Natural killer cell (primary cell): ENCODE measurements at regions of chr1 and their contacts with region 1.

Region 1: GRCh38 chr1:154955718-154956543 is at the start of gene PBXIP1:
- DNase-seq: peak; percentile 79 to 95
- ATAC-seq: peak; percentile 69 to 77 (median 71)
- H3K4me3 ChIP-seq: peak within 1 kb of the TSS; percentile 72
- H3K4me3 Mint-ChIP-seq: peak within 1 kb of the TSS; percentile 94
- H3K27ac ChIP-seq: peak within 1 kb of the TSS; percentile 95
- H3K27ac Mint-ChIP-seq: peak within 1 kb of the TSS; percentile 89 to 94
- H3K4me1 ChIP-seq: peaks cover 61% of the 10 kb centered on the region
- H3K4me1 Mint-ChIP-seq: peaks cover 58 to 60% of the 10 kb centered on the region in 2 donors
- H3K27me3 ChIP-seq: no peaks in the 10 kb centered on the region
- H3K27me3 Mint-ChIP-seq: no peaks in the 10 kb centered on the region
- CTCF ChIP-seq: no peak
- total RNA-seq, gene PBXIP1: 158 to 200 (median 197) TPM

Region 2: DNA sequence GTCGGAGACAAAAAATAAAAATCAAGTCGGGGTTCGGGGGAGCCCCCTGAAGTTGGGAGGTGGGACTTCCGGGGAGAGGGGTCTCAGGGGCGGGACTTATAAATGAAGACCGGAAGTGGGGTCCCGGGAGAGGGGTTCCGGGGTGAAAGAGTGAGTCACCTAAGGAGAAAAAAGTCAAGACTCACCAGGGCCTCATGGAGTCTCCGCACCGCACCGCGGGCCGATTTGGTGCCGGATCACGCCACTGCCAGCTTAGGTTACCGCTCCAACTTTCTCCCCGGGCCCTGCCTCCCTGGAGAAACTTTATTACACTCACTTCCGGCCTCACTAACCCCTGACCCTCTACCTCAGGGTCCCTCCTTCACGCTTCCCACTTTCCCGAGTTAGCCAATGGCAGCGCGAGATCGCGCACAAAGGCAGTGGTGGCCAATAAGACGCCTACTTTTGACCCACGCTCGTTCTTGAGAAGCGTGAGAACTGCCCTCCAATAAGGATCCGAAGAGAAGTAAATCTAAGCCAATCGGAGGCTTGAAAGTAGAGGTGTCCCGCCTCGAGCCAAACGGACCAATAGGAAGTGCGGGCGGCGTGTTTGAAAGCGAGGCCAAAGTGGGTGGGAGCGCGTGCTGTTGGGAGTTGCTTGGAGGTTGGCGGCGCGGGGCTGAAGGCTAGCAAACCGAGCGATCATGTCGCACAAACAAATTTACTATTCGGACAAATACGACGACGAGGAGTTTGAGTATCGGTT is 18.3 kb after region 1 on chr1 and contains the start of gene CKS1B:
- intact Hi-C with region 1: loop called (anchors 2 kb)
- DNase-seq: peak; percentile 96 to 99
- ATAC-seq: peak; percentile 78 to 94 (median 85)
- H3K4me3 ChIP-seq: peak within 1 kb of the TSS; percentile 91
- H3K4me3 Mint-ChIP-seq: no peak within 1 kb of the TSS
- H3K27ac ChIP-seq: peak within 1 kb of the TSS; percentile 99
- H3K27ac Mint-ChIP-seq: no peak within 1 kb of the TSS
- H3K4me1 ChIP-seq: peaks cover 43% of the 10 kb centered on the region
- H3K4me1 Mint-ChIP-seq: peaks cover 15 to 26% of the 10 kb centered on the region in 2 donors
- H3K27me3 ChIP-seq: no peaks in the 10 kb centered on the region
- H3K27me3 Mint-ChIP-seq: no peaks in the 10 kb centered on the region
- CTCF ChIP-seq: no peak
- total RNA-seq, gene CKS1B: 8.5 to 13.0 (median 12.9) TPM

Region 3: GRCh38 chr1:155017041-155017945 is 61.4 kb after region 1 on chr1:
- intact Hi-C with region 1: loop called (anchors 2 kb)
- DNase-seq: peak; percentile 88 to 94
- ATAC-seq: peak; percentile 99
- H3K4me3 ChIP-seq: peak overlapping the region; percentile 13
- H3K4me3 Mint-ChIP-seq: peak overlapping the region; percentile 52
- H3K27ac ChIP-seq: peak overlapping the region; percentile 68
- H3K27ac Mint-ChIP-seq: peak overlapping the region; percentile 27 to 50
- H3K4me1 ChIP-seq: peaks cover 58% of the 10 kb centered on the region
- H3K4me1 Mint-ChIP-seq: peaks cover 17 to 46% of the 10 kb centered on the region in 2 donors
- H3K27me3 ChIP-seq: no peaks in the 10 kb centered on the region
- H3K27me3 Mint-ChIP-seq: no peaks in the 10 kb centered on the region
- CTCF ChIP-seq: peak; percentile 100

Region 4: GRCh38 chr1:155029513-155030242 is 73.7 kb after region 1 on chr1:
- intact Hi-C with region 1: no loop called
- DNase-seq: no peak
- ATAC-seq: no peak
- H3K4me3 ChIP-seq: no peak overlapping the region
- H3K4me3 Mint-ChIP-seq: no peak overlapping the region
- H3K27ac ChIP-seq: no peak overlapping the region
- H3K27ac Mint-ChIP-seq: no peak overlapping the region
- H3K4me1 ChIP-seq: no peaks in the 10 kb centered on the region
- H3K4me1 Mint-ChIP-seq: no peaks in the 10 kb centered on the region
- H3K27me3 ChIP-seq: no peaks in the 10 kb centered on the region
- H3K27me3 Mint-ChIP-seq: no peaks in the 10 kb centered on the region
- CTCF ChIP-seq: no peak

Region 5: DNA sequence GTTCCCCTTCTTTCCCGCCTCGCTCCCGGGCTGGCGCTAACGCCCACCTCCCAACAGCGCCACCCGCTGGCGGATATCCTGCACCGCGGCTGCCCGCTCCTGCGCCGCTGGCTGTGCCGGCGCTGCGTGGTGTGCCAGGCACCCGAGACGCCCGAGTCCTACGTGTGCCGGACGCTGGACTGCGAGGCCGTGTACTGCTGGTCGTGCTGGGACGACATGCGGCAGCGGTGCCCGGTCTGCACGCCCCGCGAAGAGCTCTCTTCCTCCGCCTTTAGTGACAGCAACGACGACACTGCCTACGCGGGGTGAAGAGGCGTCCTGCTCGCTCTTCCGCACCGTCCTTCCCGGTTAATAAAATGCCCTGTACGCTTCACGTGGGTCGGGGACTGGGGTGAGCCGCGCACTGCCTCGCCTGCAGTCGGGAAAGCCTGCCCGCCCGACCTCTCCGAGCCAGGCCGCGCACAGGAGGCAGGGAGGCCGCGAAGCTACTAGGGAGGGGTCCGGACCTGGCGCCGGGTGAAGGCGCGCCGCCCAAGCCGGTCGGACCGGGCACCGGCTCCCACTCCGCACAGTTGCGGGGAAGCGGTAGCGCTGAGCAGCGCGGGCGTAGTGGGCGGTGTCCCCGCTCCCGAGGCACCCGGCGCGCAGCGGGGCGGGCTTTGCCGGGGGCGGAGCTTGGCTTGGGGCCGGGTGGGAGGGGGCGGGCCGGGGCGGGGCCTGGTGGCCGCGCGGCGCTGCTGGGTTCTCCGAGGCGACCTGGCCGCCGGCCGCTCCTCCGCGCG is 94.8 kb after region 1 on chr1 and contains the start of gene ADAM15:
- intact Hi-C with region 1: loop called (anchors 5 kb)
- DNase-seq: peak; percentile 80 to 90
- ATAC-seq: peak; percentile 76 to 91 (median 84)
- H3K4me3 ChIP-seq: peak within 1 kb of the TSS; percentile 61
- H3K4me3 Mint-ChIP-seq: peak within 1 kb of the TSS; percentile 88
- H3K27ac ChIP-seq: peak within 1 kb of the TSS; percentile 23
- H3K27ac Mint-ChIP-seq: peak within 1 kb of the TSS; percentile 23 to 77
- H3K4me1 ChIP-seq: peaks cover 31% of the 10 kb centered on the region
- H3K4me1 Mint-ChIP-seq: peaks cover 13 to 34% of the 10 kb centered on the region in 2 donors
- H3K27me3 ChIP-seq: no peaks in the 10 kb centered on the region
- H3K27me3 Mint-ChIP-seq: no peaks in the 10 kb centered on the region
- CTCF ChIP-seq: peak; percentile 96
- total RNA-seq, gene ADAM15: 54.6 to 83.2 (median 64.7) TPM

Region 6: GRCh38 chr1:155105604-155106022 is 149.7 kb after region 1 on chr1:
- intact Hi-C with region 1: no loop called
- DNase-seq: no peak
- ATAC-seq: no peak
- H3K4me3 ChIP-seq: no peak overlapping the region
- H3K4me3 Mint-ChIP-seq: no peak overlapping the region
- H3K27ac ChIP-seq: no peak overlapping the region
- H3K27ac Mint-ChIP-seq: no peak overlapping the region
- H3K4me1 ChIP-seq: no peaks in the 10 kb centered on the region
- H3K4me1 Mint-ChIP-seq: peaks cover 0 to 5% of the 10 kb centered on the region in 2 donors
- H3K27me3 ChIP-seq: no peaks in the 10 kb centered on the region
- H3K27me3 Mint-ChIP-seq: peaks cover 0 to 17% of the 10 kb centered on the region in 2 donors
- CTCF ChIP-seq: no peak